PC-9 (cell line): ENCODE measurements at regions of chr4 and their contacts with region 1.

Region 1: GRCh38 chr4:176340871-176341685 is 21.3 kb downstream of the SPCS3 start:
- DNase-seq: no peak
- H3K4me3 ChIP-seq: no peak overlapping the region
- H3K27ac ChIP-seq: no peak overlapping the region
- H3K4me1 ChIP-seq: no peaks in the 10 kb centered on the region
- H3K27me3 ChIP-seq: no peaks in the 10 kb centered on the region
- CTCF ChIP-seq: peak; percentile 59

Region 2: GRCh38 chr4:175560604-175561003 is 780.5 kb before region 1 on chr4:
- CTCF ChIA-PET with region 1: no interaction called
- POLR2A ChIA-PET with region 1: no interaction called
- intact Hi-C with region 1: loop called (anchors 5 kb)
- DNase-seq: no peak
- H3K4me3 ChIP-seq: no peak overlapping the region
- H3K27ac ChIP-seq: no peak overlapping the region
- H3K4me1 ChIP-seq: no peaks in the 10 kb centered on the region
- H3K27me3 ChIP-seq: no peaks in the 10 kb centered on the region
- CTCF ChIP-seq: peak; percentile 44

Region 3: GRCh38 chr4:175947117-175947722 is 393.9 kb before region 1 on chr4:
- CTCF ChIA-PET with region 1: no interaction called
- POLR2A ChIA-PET with region 1: no interaction called
- intact Hi-C with region 1: loop called (anchors 2 kb)
- DNase-seq: no peak
- H3K4me3 ChIP-seq: no peak overlapping the region
- H3K27ac ChIP-seq: no peak overlapping the region
- H3K4me1 ChIP-seq: no peaks in the 10 kb centered on the region
- H3K27me3 ChIP-seq: no peaks in the 10 kb centered on the region
- CTCF ChIP-seq: peak; percentile 70

Region 4: GRCh38 chr4:176034499-176034898 is 306.6 kb before region 1 on chr4:
- CTCF ChIA-PET with region 1: no interaction called
- POLR2A ChIA-PET with region 1: no interaction called
- intact Hi-C with region 1: loop called (anchors 1 kb)
- DNase-seq: no peak
- H3K4me3 ChIP-seq: no peak overlapping the region
- H3K27ac ChIP-seq: no peak overlapping the region
- H3K4me1 ChIP-seq: no peaks in the 10 kb centered on the region
- H3K27me3 ChIP-seq: no peaks in the 10 kb centered on the region
- CTCF ChIP-seq: peak; percentile 56

Region 5: DNA sequence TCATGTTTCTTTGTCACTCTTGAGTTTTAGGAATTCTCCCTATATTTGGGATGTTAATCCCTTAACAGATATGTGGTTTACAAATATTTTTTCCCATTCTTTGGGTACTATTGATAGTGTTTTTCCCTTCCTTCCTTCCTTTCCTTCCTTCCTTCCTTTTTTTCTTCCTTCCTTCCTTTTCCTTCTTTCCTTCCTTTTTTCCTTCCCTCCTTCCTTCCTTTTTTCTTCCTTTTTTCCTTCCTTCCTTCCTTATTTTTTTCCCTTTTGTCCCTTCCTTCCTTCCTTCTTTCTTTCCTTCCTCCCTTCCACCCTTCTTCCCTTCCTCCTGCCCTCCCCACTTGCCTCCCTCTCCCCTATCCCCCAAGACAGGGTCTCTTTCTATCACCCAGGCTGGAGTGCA is 233.4 kb before region 1 on chr4:
- CTCF ChIA-PET with region 1: no interaction called
- POLR2A ChIA-PET with region 1: no interaction called
- intact Hi-C with region 1: no loop called
- DNase-seq: no peak
- H3K4me3 ChIP-seq: no peak overlapping the region
- H3K27ac ChIP-seq: no peak overlapping the region
- H3K4me1 ChIP-seq: no peaks in the 10 kb centered on the region
- H3K27me3 ChIP-seq: no peaks in the 10 kb centered on the region
- CTCF ChIP-seq: no peak

Region 6: GRCh38 chr4:176150356-176150682 is 190.8 kb before region 1 on chr4:
- CTCF ChIA-PET with region 1: interaction called, 11 read pairs
- POLR2A ChIA-PET with region 1: no interaction called
- intact Hi-C with region 1: loop called (anchors 1 kb)
- DNase-seq: no peak
- H3K4me3 ChIP-seq: no peak overlapping the region
- H3K27ac ChIP-seq: no peak overlapping the region
- H3K4me1 ChIP-seq: no peaks in the 10 kb centered on the region
- H3K27me3 ChIP-seq: no peaks in the 10 kb centered on the region
- CTCF ChIP-seq: peak; percentile 57

Region 7: DNA sequence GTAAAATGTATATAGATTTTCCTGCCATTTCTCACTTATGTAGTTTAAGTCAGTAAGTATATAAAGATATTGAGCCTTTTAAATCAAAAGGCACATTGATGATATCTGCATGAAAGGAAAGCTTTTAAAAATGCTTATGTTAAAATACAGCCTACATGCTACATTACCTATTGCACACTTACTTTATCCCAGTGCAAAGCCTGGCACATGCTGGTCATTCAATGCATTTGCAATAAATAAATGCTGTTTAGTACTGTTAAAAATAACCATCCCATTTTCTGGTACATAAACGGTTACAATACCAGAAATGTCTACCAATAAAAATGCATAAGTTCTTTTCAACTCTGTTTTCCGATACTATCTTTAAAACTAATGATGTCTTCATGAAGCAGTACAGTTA is 123.6 kb before region 1 on chr4:
- CTCF ChIA-PET with region 1: no interaction called
- POLR2A ChIA-PET with region 1: no interaction called
- intact Hi-C with region 1: no loop called
- DNase-seq: no peak
- H3K4me3 ChIP-seq: no peak overlapping the region
- H3K27ac ChIP-seq: no peak overlapping the region
- H3K4me1 ChIP-seq: no peaks in the 10 kb centered on the region
- H3K27me3 ChIP-seq: no peaks in the 10 kb centered on the region
- CTCF ChIP-seq: no peak

Region 8: GRCh38 chr4:176319704-176320339 is 21.3 kb before region 1 on chr4 and contains the start of gene SPCS3:
- CTCF ChIA-PET with region 1: no interaction called
- POLR2A ChIA-PET with region 1: no interaction called
- intact Hi-C with region 1: no loop called
- DNase-seq: peak; percentile 76 to 93
- H3K4me3 ChIP-seq: peak within 1 kb of the TSS; percentile 95
- H3K27ac ChIP-seq: peak within 1 kb of the TSS; percentile 87
- H3K4me1 ChIP-seq: peaks cover 18% of the 10 kb centered on the region
- H3K27me3 ChIP-seq: no peaks in the 10 kb centered on the region
- CTCF ChIP-seq: no peak
- total RNA-seq, gene SPCS3: 107 TPM in 2 replicates